ENCODE measurements at regions of chr13 and their contacts with region 1.

Region 1: GRCh38 chr13:110965038-110965754 is 50.3 kb upstream of the ANKRD10 start:
- DNase-seq: peak; percentile 64
- H3K4me3 Mint-ChIP-seq: peak overlapping the region; percentile 25
- H3K27ac Mint-ChIP-seq: peak overlapping the region; percentile 81
- H3K4me1 Mint-ChIP-seq: peaks cover 25% of the 10 kb centered on the region
- H3K27me3 Mint-ChIP-seq: peaks cover 6% of the 10 kb centered on the region

Region 2: DNA sequence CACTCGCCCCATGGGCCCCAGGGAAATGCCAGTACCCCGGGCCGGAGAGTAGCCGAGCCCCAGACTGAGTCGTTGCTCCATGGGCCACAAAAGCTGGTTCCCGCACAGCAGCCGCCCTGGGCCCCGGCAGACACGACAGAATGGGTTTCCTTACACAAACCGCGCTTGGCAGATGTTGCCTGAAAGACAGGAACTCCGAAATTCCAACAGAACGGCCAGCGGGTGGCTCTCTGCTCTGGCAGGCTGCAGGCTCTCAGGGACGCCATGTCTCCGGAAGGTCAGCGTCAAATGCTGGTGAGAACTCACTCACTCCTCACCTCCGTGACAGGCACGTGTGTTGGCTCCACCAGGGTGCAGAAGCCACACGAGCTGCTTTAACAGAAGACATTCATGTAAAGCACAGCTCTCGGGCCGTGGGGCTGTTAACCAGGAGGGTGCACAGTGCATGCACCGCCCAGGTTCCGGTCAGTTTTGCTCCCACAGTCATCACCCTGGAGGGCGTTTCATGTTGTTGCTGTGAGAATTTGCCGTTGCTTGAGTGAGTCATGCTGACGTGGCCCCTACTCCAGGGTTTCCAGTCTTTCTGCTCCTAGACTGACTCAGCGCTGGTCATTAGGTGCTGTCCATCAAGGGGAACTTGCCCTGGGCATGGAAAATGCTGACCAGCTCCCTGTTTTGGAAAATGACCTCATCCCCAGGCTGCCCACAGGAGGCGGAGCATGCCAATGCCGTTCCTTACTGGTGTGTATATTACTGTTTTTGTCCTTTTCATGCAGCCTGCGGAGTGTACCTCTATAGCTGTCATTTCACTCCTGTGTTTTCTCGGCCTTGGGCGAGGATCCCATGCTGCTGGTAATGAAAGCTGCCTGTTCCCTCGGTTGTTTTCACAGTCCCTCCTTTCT is 95.1 kb before region 1 on chr13:
- CTCF ChIA-PET with region 1: no interaction called
- POLR2A ChIA-PET with region 1: no interaction called
- intact Hi-C with region 1: loop called (anchors 1 kb)
- DNase-seq: peak; percentile 68
- H3K4me3 Mint-ChIP-seq: no peak overlapping the region
- H3K27ac Mint-ChIP-seq: no peak overlapping the region
- H3K4me1 Mint-ChIP-seq: peaks cover 15% of the 10 kb centered on the region
- H3K27me3 Mint-ChIP-seq: peaks cover 47% of the 10 kb centered on the region

Measured in activated CD4-positive, alpha-beta memory T cell treated with anti-CD3 and anti-CD28 coated beads for 36 hours (primary cell).